AG04449 (cell line): ENCODE measurements at regions of chr1 and their contacts with region 1.

Region 1: GRCh38 chr1:67053785-67054772 is at the start of gene SLC35D1:
- DNase-seq: no peak
- H3K4me3 ChIP-seq: peak within 1 kb of the TSS; percentile 83
- CTCF ChIP-seq: no peak

Region 2: DNA sequence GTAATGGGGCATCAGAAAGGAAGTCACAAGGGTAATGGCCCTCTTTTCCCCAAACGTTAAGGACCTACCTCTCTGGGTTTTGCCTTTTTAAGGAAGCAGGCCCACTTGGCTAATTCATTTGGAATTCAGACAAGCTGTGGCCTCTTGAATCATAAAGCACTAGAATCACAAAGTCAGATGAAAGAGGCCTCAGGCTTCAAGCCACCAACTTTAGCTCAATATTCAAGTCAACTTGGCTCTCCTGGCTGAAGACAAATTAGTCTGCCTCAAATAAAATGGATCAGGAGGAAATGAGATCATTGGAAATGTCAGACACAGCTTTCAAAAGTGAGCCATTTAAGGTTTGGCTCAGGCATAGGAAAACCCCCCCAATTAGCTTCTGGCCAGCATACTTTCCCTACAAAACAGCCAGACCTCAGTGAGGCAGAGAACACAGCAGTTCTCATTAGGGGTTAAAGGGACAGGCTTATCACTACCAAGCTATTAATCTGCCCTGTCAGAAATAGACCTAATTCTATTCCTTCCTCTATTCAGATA is 34.4 kb before region 1 on chr1:
- CTCF ChIA-PET with region 1: no interaction called
- POLR2A ChIA-PET with region 1: interaction called, 10 read pairs
- DNase-seq: peak; percentile 60
- H3K4me3 ChIP-seq: no peak overlapping the region
- CTCF ChIP-seq: no peak

Region 3: DNA sequence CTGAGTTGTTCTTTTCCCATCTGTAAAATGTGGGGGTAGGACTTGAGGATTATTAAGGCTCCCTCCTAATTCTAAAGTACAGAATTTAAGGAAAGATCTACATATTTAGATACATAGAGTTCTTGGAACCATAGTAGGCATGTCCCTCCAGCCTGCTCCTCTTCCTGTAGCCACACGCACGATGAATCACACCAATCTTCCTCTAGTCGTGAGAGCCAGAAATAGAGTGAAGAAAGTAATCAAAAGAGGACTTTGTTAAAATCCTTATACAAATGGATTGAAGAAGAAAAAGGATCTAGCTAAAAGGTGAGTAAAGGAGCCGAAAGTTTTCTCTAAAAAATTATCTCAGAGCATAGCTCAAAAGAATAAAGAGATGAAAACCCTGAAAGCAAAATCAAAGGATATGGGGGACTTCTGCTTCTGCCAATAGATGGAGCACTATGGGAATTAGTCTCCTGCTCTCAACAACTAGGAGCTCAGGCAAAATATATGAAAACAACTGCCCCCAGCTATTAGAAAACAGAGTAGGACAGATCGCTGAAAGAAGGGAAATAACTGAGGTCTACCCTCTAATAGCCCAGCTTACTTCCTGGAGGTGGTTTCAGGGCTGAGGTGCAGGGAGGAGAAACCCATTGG is 72.2 kb after region 1 on chr1:
- CTCF ChIA-PET with region 1: no interaction called
- POLR2A ChIA-PET with region 1: no interaction called
- DNase-seq: no peak
- H3K4me3 ChIP-seq: no peak overlapping the region
- CTCF ChIP-seq: no peak

Region 4: DNA sequence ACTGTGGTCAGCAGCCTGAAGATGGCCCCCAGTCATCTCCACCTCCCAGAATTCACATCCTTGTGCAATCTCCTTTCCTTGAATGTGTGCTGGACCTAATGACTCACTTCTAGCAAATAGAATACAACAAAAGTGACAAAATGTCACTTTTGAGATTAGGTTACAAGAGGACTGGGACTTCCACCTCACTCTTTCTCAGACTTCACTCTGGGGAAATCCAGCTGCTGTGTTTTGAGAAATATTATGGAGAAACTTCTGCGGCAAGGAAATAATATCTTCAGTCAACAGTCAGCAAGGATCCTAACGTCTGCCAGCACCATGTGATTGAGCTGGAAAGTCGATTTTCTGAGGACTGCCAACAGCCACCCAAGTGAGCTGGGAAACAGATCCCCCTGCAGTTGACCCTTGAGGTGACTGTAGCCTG is 560.4 kb after region 1 on chr1:
- CTCF ChIA-PET with region 1: no interaction called
- POLR2A ChIA-PET with region 1: no interaction called
- DNase-seq: no peak
- H3K4me3 ChIP-seq: no peak overlapping the region
- CTCF ChIP-seq: no peak